Posterior cingulate gyrus (tissue), 11 donors: ENCODE measurements at regions of chr2 and their contacts with region 1.

Region 1: GRCh38 chr2:241508240-241509154 is at the start of gene STK25:
- DNase-seq: peak; percentile 96 to 100 (median 98)

Region 2: GRCh38 chr2:241315093-241315878 is 193.2 kb before region 1 on chr2 and contains the start of gene HDLBP:
- intact Hi-C with region 1: no loop called
- DNase-seq: peak; percentile 96 to 99 (median 98)

Region 3: DNA sequence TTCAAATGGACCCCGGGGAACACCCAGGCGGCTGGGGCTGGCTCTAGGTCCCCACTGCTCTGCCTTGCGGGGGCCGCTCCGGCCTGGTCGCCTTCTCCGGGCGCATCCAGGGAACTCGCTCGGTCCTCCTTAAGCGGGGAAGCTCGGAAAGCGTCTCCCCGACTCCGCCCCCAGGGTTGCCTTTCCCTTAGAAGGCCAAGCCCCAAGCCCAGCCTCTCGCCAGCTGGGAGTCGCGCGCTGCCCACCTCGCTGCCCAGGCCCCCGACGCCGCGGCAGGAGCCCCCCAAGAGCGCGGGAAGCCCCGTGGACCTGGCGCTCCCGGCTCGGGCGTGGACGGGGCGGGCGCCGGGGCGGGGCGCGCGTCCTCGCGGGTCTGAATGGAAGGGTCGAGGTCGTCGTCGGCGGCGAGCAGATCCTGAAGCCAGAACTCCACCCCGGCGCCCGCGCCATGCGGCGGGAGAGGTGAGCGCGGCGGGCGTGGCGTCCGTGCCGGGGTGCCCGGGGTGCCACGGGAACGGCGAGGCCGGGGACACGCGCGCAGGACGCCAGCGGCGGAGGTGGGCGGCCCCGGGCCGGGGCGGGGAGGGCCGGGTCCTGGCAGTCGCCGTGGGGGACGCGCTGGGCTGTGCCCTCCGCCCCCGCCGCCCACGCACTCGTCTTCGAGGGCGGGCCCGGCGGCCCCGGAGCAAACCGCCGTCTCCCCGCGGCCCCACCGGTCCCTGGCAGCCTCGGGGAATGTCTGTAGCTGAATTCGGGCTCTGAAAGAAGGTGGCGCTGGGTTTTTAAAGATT is 50.2 kb after region 1 on chr2 and contains the start of gene BOK:
- intact Hi-C with region 1: loop called (anchors 5 kb)
- DNase-seq: peak; percentile 53 to 96 (median 72)

Region 4: GRCh38 chr2:241609859-241610793 is 101.6 kb after region 1 on chr2:
- intact Hi-C with region 1: loop called (anchors 10 kb)
- DNase-seq: peak; percentile 38 to 96 (median 66)

Region 5: GRCh38 chr2:241637000-241637791 is 128.7 kb after region 1 on chr2 and contains the starts of genes ATG4B and THAP4:
- intact Hi-C with region 1: loop called (anchors 2 kb)
- DNase-seq: peak; percentile 77 to 97 (median 82)